ENCODE measurements at regions of chr15 and their contacts with region 1.

Region 1: DNA sequence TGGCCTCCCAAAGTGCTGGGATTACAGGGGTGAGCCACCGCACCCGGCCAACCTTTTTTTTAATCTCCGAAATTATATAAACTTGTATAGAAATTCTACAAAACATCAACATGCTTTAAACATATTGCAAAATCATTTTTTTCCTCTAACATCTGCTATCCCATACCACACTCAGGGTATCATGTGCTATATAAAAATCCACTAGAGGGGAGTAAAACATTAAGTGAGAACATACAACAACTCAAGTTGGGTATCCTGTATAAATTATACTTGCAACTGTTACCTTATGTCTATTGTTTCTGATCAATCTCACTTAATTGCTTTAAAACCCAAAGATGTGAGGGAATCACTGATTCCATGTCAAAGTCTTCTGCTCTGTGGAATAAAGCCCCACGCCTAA is 71.9 kb upstream of the FBN1 start:
- DNase-seq: no peak
- ATAC-seq: no peak
- H3K4me3 ChIP-seq: no peak overlapping the region
- H3K27ac ChIP-seq: no peak overlapping the region
- H3K4me1 ChIP-seq: peaks cover 0 to 44% of the 10 kb centered on the region in 2 experiments; a peak in 3 of 5 replicates
- H3K27me3 ChIP-seq: no peaks in the 10 kb centered on the region
- CTCF ChIP-seq: peak in 1 of 3 experiments; percentile 34; a peak in 2 of 6 replicates
- EP300 ChIP-seq: no peak
- POLR2A ChIP-seq: no peak
- RAD21 ChIP-seq: peak; percentile 38 to 39; a peak in 2 of 4 replicates

Region 2: GRCh38 chr15:48205981-48206380 is 511.5 kb before region 1 on chr15 and contains the start of gene SLC12A1:
- CTCF ChIA-PET with region 1: no interaction called
- POLR2A ChIA-PET with region 1: no interaction called
- in situ Hi-C with region 1: no loop called
- intact Hi-C with region 1: no loop called
- DNase-seq: no peak
- ATAC-seq: no peak
- H3K4me3 ChIP-seq: no peak within 1 kb of the TSS
- H3K27ac ChIP-seq: no peak within 1 kb of the TSS
- H3K4me1 ChIP-seq: no peaks in the 10 kb centered on the region
- H3K27me3 ChIP-seq: no peaks in the 10 kb centered on the region
- CTCF ChIP-seq: no peak
- EP300 ChIP-seq: no peak
- POLR2A ChIP-seq: no peak
- RAD21 ChIP-seq: no peak
- polyA plus RNA-seq, gene SLC12A1: not detected

Region 3: GRCh38 chr15:48703544-48703943 is 13.9 kb before region 1 on chr15:
- CTCF ChIA-PET with region 1: no interaction called
- POLR2A ChIA-PET with region 1: no interaction called
- in situ Hi-C with region 1: no loop called
- intact Hi-C with region 1: no loop called
- DNase-seq: no peak
- ATAC-seq: no peak
- H3K4me3 ChIP-seq: no peak overlapping the region
- H3K27ac ChIP-seq: no peak overlapping the region
- H3K4me1 ChIP-seq: no peaks in the 10 kb centered on the region
- H3K27me3 ChIP-seq: no peaks in the 10 kb centered on the region
- CTCF ChIP-seq: no peak
- EP300 ChIP-seq: no peak
- POLR2A ChIP-seq: no peak
- RAD21 ChIP-seq: no peak

Region 4: DNA sequence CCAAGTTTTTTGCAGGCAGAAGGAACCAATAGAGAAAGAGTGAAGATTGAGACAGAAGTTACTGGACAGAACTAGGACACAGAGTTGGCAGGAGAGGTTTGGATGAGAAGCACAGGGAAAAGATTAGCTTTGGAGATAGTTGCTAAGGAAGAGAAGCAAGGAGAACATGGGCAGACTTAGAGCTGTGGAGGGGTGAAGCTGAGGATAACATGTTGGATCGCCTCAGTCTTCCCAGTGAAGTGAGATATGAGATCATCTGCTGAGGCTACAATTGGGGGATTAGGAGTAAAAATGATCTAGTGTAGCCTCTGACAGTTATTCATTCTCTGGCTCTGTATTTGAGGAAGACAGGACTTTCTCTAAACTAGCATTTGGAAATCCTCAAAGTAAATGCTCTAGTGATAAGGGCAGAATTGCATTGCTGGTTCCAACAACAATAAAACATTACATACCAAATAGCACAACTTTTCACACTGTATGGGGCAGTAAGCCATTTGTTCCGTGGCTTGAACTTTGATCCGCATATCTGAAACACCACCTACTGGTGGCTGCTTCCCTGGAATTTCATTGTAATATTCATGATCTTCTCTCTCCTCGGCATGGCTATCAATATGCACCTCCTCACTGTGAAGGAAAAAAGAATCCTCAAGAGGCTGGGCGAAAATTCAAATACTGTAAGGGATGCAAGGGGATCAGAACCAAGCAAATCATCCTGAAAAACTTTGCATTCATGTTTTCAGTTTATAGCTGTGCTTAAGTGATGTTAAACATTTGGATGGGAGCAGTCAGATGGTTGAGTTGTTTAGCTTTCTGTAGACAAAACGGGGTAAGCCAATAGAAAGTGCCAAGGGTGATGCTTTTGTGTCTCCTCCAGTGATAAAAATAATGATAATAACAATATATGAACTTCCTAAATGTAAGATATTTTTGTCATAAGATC is 138.3 kb after region 1 on chr15:
- CTCF ChIA-PET with region 1: no interaction called
- POLR2A ChIA-PET with region 1: no interaction called
- in situ Hi-C with region 1: no loop called
- intact Hi-C with region 1: loop called (anchors 5 kb)
- DNase-seq: peak in 3 of 4 experiments; percentile 15 to 65 (median 40)
- ATAC-seq: peak; percentile 83
- H3K4me3 ChIP-seq: no peak overlapping the region
- H3K27ac ChIP-seq: no peak overlapping the region
- H3K4me1 ChIP-seq: peaks cover 0 to 31% of the 10 kb centered on the region in 2 experiments; a peak in 4 of 5 replicates
- H3K27me3 ChIP-seq: no peaks in the 10 kb centered on the region
- CTCF ChIP-seq: peak; percentile 48 to 66 (median 64); a peak in 5 of 6 replicates
- EP300 ChIP-seq: no peak
- POLR2A ChIP-seq: no peak
- RAD21 ChIP-seq: peak; percentile 58 to 80